ENCODE measurements at regions of chr2 and their contacts with region 1.

Region 1: DNA sequence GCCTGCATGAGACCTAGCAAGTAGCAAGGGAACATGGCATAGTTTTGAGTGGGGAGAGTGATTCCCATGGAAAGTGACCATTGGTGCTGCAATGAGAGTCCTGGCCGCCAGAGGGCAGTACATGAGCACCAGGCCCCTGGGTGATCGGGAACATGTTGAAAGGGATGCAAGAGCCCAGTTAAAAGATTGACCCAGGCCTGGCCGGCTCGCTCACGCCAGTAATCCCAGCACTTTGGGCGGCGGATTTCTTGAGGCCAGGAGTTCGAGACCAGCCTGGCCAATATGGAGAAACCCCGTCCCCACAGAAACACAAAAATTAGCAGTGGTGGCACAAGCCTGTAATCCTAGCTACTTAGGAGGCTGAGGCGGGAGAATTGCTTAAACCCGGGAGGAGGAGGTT is 22.2 kb downstream of the FAP start:
- DNase-seq: peak; percentile 56
- ATAC-seq: peak; percentile 99
- H3K4me3 ChIP-seq: no peak overlapping the region
- H3K27ac ChIP-seq: no peak overlapping the region
- H3K4me1 ChIP-seq: no peaks in the 10 kb centered on the region
- H3K27me3 ChIP-seq: no peaks in the 10 kb centered on the region
- CTCF ChIP-seq: peak; percentile 95
- EP300 ChIP-seq: no peak
- POLR2A ChIP-seq: no peak
- RAD21 ChIP-seq: peak; percentile 74

Region 2: GRCh38 chr2:162210385-162210784 is 10.7 kb before region 1 on chr2:
- CTCF ChIA-PET with region 1: no interaction called
- POLR2A ChIA-PET with region 1: no interaction called
- in situ Hi-C with region 1: no loop called
- intact Hi-C with region 1: no loop called
- DNase-seq: no peak
- ATAC-seq: no peak
- H3K4me3 ChIP-seq: no peak overlapping the region
- H3K27ac ChIP-seq: no peak overlapping the region
- H3K4me1 ChIP-seq: no peaks in the 10 kb centered on the region
- H3K27me3 ChIP-seq: peaks cover 1 to 10% of the 10 kb centered on the region in 2 experiments; a peak in 2 of 5 replicates
- CTCF ChIP-seq: no peak
- EP300 ChIP-seq: no peak
- POLR2A ChIP-seq: no peak
- RAD21 ChIP-seq: no peak

Region 3: GRCh38 chr2:162233197-162233596 is 12.1 kb after region 1 on chr2:
- CTCF ChIA-PET with region 1: no interaction called
- POLR2A ChIA-PET with region 1: no interaction called
- in situ Hi-C with region 1: no loop called
- intact Hi-C with region 1: no loop called
- DNase-seq: no peak
- ATAC-seq: no peak
- H3K4me3 ChIP-seq: no peak overlapping the region
- H3K27ac ChIP-seq: no peak overlapping the region
- H3K4me1 ChIP-seq: no peaks in the 10 kb centered on the region
- H3K27me3 ChIP-seq: no peaks in the 10 kb centered on the region
- CTCF ChIP-seq: no peak
- EP300 ChIP-seq: no peak
- POLR2A ChIP-seq: no peak
- RAD21 ChIP-seq: no peak

Region 4: GRCh38 chr2:162282765-162283425 is 61.8 kb after region 1 on chr2:
- CTCF ChIA-PET with region 1: no interaction called
- POLR2A ChIA-PET with region 1: no interaction called
- in situ Hi-C with region 1: no loop called
- intact Hi-C with region 1: no loop called
- DNase-seq: no peak
- ATAC-seq: no peak
- H3K4me3 ChIP-seq: no peak overlapping the region
- H3K27ac ChIP-seq: no peak overlapping the region
- H3K4me1 ChIP-seq: no peaks in the 10 kb centered on the region
- H3K27me3 ChIP-seq: no peaks in the 10 kb centered on the region
- CTCF ChIP-seq: no peak
- EP300 ChIP-seq: no peak
- POLR2A ChIP-seq: no peak
- RAD21 ChIP-seq: no peak

Region 5: GRCh38 chr2:162333968-162334367 is 112.9 kb after region 1 on chr2:
- CTCF ChIA-PET with region 1: interaction called, 3 read pairs
- POLR2A ChIA-PET with region 1: no interaction called
- in situ Hi-C with region 1: no loop called
- intact Hi-C with region 1: loop called (anchors 1 kb)
- DNase-seq: peak; percentile 38
- ATAC-seq: peak; percentile 95
- H3K4me3 ChIP-seq: no peak overlapping the region
- H3K27ac ChIP-seq: no peak overlapping the region
- H3K4me1 ChIP-seq: no peaks in the 10 kb centered on the region; the same call in 1 of the 2 replicates
- H3K27me3 ChIP-seq: no peaks in the 10 kb centered on the region
- CTCF ChIP-seq: peak; percentile 69
- EP300 ChIP-seq: no peak
- POLR2A ChIP-seq: no peak
- RAD21 ChIP-seq: no peak

Region 6: GRCh38 chr2:163132850-163133249 is 911.8 kb after region 1 on chr2:
- CTCF ChIA-PET with region 1: no interaction called
- POLR2A ChIA-PET with region 1: no interaction called
- in situ Hi-C with region 1: no loop called
- intact Hi-C with region 1: loop called (anchors 1 kb)
- DNase-seq: peak; percentile 5
- ATAC-seq: no peak
- H3K4me3 ChIP-seq: no peak overlapping the region
- H3K27ac ChIP-seq: no peak overlapping the region
- H3K4me1 ChIP-seq: no peaks in the 10 kb centered on the region
- H3K27me3 ChIP-seq: no peaks in the 10 kb centered on the region
- CTCF ChIP-seq: peak; percentile 42
- EP300 ChIP-seq: no peak
- POLR2A ChIP-seq: no peak
- RAD21 ChIP-seq: no peak

Measured in HepG2 (cell line).